ENCODE measurements at regions of chr15 and their contacts with region 1.

Region 1: DNA sequence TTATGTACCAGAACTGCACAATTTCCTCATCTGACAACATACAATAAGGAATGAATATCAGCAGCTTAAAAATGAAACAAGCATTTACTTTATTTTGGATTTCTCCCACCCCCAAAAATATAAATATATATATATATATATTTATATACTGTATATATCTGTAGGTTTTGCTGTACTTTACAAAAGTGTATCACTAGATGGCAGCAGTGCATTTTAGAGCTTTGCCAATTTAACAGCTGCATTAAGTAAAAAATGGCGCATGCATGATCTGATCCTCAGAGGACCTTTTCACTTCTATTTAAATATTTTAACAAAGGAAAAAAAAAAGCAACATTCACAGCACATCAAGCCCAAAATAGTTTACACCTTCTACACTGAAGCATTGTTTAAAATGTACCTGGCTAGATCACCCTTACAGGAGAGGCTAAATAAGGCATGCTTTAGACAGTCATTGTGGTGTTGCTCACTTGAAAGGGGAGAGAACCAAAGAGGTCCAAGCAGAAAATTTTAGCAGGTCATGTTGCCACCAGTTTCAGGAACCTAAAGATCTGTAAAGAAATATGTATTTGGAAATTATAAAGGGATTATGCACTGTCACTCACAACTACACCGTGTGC is 72.6 kb downstream of the NPTN start:
- DNase-seq: no peak
- H3K4me3 ChIP-seq: no peak overlapping the region
- H3K27ac ChIP-seq: no peak overlapping the region
- H3K4me1 ChIP-seq: peaks cover 2% of the 10 kb centered on the region
- H3K27me3 ChIP-seq: no peaks in the 10 kb centered on the region
- CTCF ChIP-seq: peak in 1 of 3 experiments; percentile 44
- POLR2A ChIP-seq: no peak

Region 2: DNA sequence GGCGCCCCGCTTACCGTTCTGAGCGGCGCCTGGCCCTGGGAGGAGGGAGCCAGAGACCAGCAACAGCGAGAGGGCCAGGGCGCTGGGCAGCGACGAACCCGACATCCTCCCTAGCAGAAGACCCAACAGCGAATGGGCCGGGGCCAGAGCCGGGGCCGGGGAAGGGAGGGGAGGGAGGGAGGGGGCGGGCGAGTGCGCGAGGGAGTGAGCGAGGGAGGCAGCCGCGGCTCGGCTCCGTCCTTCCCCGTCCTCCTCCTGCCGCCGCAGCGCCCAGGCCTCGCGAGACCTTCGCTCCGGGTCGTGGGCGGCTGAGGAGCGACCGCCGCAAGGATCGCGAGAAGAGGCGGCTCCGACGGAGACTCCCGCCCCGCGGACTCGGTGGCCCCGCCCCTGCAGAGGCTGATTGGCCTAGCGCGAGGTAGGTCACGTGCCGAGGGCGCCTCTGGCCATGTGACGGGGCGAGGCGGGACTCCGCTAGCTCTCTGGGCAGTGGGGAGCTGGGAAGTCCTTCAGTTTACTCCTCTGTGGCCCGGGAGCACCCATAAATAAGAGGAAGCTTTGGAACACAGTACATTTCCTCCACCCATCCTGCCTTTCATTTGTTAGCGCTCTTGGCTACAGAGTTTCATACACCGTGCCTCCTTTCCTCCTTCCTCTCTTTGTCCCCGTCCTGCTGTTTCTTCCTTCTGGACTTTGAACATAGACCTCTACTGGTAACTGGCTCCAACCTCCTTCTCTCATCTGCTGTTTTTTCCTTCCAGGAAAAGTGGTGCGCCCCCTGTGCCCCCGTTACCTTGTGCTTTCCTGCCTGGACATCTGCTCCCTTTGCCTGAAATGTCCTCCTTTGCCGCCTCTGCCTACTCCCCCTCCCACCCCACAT is 72.7 kb after region 1 on chr15 and contains the start of gene NPTN:
- intact Hi-C with region 1: loop called (anchors 10 kb)
- DNase-seq: peak; percentile 98
- H3K4me3 ChIP-seq: peak within 1 kb of the TSS; percentile 91 to 100
- H3K27ac ChIP-seq: peak within 1 kb of the TSS; percentile 99
- H3K4me1 ChIP-seq: peaks cover 38% of the 10 kb centered on the region
- H3K27me3 ChIP-seq: no peaks in the 10 kb centered on the region
- CTCF ChIP-seq: no peak
- POLR2A ChIP-seq: peak; percentile 75
- total RNA-seq, gene NPTN: 177 to 256 TPM

Measured in testis (tissue), 5 donors.